A549 (cell line): ENCODE measurements at regions of chr14 and their contacts with region 1.

Region 1: DNA sequence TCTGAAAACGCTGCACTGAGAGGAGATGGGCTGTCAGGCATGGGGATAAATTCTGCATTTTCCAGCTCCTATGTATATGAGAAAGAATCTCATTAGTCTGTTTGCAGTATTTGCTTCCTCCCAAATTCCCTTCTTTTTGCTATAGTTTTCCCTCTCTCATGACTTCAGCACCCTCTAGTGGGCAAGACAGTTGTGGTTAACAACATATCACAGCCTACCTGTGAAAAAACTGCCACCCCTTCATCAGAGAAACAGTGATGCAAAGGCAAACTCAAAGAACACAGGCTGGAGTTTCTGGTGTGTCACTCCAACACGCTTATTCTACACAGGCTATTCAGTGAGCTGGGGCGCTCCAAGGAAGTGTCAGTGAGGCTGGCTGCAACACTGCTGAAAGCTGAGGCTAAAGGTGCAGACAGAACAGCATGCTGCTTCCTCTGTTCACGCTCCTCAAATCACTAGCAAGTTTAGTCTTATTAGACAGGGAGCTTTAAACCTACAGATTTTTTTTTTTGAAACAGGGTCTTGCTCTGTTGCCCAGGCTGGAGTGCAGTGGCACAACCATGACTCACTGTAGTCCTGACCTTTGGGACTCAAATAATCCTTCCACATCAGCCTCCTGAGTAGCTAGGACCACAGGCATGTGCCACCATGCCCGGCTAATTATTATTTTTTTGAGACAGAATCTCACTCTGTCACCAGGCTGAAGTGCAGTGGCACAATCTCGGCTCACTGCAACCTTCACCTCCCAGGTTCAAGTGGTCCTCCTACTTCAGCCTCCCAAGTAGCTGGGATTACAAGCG is 19.3 kb downstream of the ZC2HC1C start:
- DNase-seq: peak; percentile 43 to 63
- ATAC-seq: peak; percentile 90 to 94
- H3K4me3 ChIP-seq: no peak overlapping the region
- H3K27ac ChIP-seq: no peak overlapping the region
- H3K4me1 ChIP-seq: no peaks in the 10 kb centered on the region
- CTCF ChIP-seq: peak; percentile 86
- EP300 ChIP-seq: no peak
- POLR2A ChIP-seq: no peak
- RAD21 ChIP-seq: peak; percentile 84 to 93

Region 2: DNA sequence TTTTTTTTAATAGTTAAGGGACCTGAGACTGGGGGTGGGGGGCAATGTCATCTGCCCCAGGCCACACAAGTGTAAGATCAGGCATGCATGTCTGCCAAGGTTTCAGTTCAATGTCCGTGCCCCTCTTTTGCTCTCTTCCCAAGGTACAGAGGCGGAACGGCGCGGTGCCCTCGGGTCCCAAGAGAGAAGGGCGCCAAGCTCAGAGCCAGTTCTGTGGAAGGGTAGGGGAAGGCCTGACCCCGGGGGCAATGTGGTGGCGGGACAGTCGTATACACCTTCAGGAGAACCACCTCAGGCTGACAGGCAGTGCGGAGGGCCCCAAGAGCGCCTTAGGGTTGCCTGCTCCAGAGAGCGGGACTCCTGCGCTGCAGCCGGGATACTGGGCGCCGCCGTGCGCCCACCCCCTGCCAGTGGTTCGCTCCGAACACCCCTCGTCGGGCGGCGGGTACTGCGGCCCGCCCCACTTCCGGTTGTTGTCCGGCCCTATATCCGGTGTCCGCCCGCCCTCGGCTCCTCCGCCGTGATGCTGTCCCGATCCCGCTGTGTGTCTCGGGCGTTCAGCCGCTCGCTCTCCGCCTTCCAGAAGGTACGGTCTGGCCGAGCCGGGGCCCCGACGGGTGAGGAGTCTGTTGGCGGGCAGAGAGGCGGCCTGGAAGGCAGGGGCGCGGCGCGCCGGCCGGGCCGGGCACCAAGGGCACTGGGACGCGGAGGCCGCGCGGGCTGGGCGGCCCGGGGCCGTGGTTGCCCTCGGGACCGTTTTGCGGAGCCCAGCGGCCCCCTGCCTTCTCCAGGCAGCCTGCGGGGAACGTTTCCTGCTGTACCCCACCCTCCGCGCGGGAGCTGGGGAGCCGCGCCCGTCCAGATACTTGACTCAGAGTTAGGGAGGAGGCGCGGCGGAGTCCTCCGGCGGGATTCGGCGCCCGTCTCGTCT is 207.1 kb before region 1 on chr14 and contains the start of gene DLST:
- CTCF ChIA-PET with region 1: interaction called, 19 read pairs
- POLR2A ChIA-PET with region 1: no interaction called
- DNase-seq: peak; percentile 90 to 92
- ATAC-seq: peak; percentile 98
- H3K4me3 ChIP-seq: peak within 1 kb of the TSS; percentile 100
- H3K27ac ChIP-seq: peak within 1 kb of the TSS; percentile 94 to 99
- H3K4me1 ChIP-seq: peaks cover 50% of the 10 kb centered on the region
- CTCF ChIP-seq: no peak
- EP300 ChIP-seq: no peak
- POLR2A ChIP-seq: no peak; the same call in none of the 2 replicates
- RAD21 ChIP-seq: no peak
- polyA plus RNA-seq, gene DLST: 129 and 137 TPM in 2 replicates

Region 3: GRCh38 chr14:74913986-74914573 is 174.7 kb before region 1 on chr14:
- CTCF ChIA-PET with region 1: interaction called, 87 read pairs
- POLR2A ChIA-PET with region 1: no interaction called
- DNase-seq: peak; percentile 68 to 73
- ATAC-seq: peak; percentile 85 to 88
- H3K4me3 ChIP-seq: no peak overlapping the region
- H3K27ac ChIP-seq: no peak overlapping the region
- H3K4me1 ChIP-seq: peaks cover 9% of the 10 kb centered on the region; the same call in 2 of the 3 replicates
- CTCF ChIP-seq: peak; percentile 78
- EP300 ChIP-seq: no peak
- POLR2A ChIP-seq: no peak
- RAD21 ChIP-seq: peak; percentile 73 to 75

Region 4: DNA sequence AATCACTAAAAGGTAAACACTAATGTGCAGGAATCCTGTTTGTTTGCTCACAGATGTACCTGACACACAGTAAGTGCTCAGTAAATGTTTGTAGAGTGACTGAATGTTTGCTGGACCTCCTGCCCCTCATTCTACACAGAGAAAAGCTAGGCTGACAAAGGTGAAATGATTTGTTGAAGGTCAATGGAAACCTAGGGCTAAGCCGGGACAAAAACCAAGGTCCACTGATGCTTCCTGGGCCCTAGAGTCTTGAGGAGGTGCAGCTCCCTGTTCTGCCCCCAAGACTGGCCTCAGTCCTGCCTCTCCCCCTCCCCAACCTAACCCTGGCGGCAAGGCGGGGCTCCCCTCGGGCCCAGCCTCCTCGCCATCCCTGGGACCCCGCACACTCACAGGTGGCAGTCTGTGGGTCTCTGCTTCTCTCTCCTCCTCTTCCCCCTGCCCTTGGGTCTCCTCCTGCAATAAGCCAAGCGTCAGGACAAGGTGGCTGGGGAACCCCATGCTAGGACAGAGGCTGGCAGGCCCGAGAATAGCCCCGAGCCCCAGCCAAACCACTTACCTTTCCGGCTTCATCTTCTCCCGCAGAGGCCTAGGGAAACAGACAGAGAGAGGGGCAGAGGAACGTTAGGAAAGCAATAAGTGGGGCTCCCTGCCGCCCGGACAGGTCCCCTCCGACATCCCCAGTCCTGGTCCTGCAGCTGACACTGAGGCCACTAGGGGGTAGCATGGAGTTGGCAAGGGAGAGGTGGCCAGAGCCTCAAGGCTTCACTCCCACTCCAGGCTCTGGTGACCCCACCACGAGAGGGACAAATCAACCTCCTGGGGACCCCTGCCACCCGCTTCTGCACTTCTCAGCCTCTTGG is 142.7 kb before region 1 on chr14:
- CTCF ChIA-PET with region 1: interaction called, 62 read pairs
- POLR2A ChIA-PET with region 1: no interaction called
- DNase-seq: peak; percentile 68 to 95
- ATAC-seq: peak; percentile 80 to 92
- H3K4me3 ChIP-seq: no peak overlapping the region
- H3K27ac ChIP-seq: peak overlapping the region; percentile 37 to 65; a peak in 4 of 6 replicates
- H3K4me1 ChIP-seq: peaks cover 19% of the 10 kb centered on the region
- CTCF ChIP-seq: peak; percentile 83
- EP300 ChIP-seq: no peak
- POLR2A ChIP-seq: no peak
- RAD21 ChIP-seq: peak; percentile 81 to 83

Region 5: GRCh38 chr14:74973003-74973653 is 115.6 kb before region 1 on chr14:
- CTCF ChIA-PET with region 1: interaction called, 10 read pairs
- POLR2A ChIA-PET with region 1: no interaction called
- DNase-seq: no peak
- ATAC-seq: no peak
- H3K4me3 ChIP-seq: no peak overlapping the region
- H3K27ac ChIP-seq: no peak overlapping the region
- H3K4me1 ChIP-seq: no peaks in the 10 kb centered on the region
- CTCF ChIP-seq: no peak
- EP300 ChIP-seq: no peak
- POLR2A ChIP-seq: no peak
- RAD21 ChIP-seq: no peak

Region 6: DNA sequence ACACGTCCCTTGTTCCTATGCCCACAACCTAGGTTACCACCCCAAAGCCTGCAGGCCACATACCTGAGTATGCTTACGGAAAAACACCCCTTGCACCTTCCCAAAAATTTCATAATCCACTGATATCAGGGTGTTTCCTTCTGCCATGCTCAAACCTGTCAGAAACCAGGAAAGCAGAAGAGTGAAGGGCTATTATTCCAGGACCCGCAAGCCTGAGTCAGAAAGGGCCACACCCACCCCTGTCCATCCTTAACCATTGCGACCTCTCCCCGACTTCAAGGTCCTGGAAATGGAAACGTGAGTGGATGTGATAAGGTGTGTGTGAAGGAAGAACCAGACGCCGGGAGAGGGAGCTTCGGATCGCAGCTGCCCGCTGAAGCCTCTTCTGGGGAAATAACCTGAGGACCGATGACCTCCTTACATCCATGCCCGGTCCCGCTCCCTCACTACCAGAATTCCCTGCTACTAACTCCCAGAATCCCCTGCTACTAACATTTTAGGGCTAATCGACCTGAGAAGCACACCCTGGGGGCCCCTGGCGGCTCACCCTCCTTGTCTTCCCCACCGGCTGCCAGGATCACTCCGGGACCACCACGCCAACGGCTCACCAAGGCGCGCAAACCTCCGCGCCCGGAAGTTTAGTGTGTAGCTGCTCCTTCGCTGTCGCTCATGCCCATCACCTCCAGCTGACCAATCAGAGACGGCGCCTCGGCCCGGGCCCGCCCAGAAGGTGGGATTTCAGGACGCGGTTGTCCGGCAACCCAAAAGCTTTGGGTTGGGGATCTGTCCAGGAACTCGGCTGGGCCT is 25.2 kb before region 1 on chr14 and contains the start of gene ACYP1:
- CTCF ChIA-PET with region 1: interaction called, 85 read pairs
- POLR2A ChIA-PET with region 1: interaction called, 3 read pairs
- DNase-seq: peak; percentile 83 to 90
- ATAC-seq: peak; percentile 97 to 99
- H3K4me3 ChIP-seq: peak within 1 kb of the TSS; percentile 55
- H3K27ac ChIP-seq: peak within 1 kb of the TSS; percentile 64 to 87
- H3K4me1 ChIP-seq: peaks cover 19% of the 10 kb centered on the region; the same call in 2 of the 3 replicates
- CTCF ChIP-seq: no peak
- EP300 ChIP-seq: no peak
- POLR2A ChIP-seq: peak; percentile 22; the same call in 1 of the 2 replicates
- RAD21 ChIP-seq: no peak
- polyA plus RNA-seq, gene ACYP1: 26.5 and 36.7 TPM in 2 replicates

Region 7: DNA sequence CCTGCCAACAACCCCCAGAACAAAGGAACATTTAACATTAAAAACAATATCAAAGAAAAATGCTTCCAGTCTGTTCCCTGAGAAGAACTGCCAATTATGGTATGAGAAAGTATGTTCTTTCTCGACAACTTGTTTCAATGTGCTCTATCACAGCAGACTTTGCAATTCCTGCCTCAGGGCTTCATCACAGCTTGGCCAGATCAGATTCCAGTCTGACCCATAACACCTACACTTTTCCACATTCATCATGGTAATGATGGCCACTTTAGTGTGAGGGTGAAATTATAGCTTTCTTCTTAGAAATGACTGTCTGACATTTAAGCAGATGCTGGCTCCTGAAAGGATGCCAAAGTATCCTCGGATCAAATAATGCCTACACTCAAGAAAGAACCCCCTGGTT is 21.1 kb after region 1 on chr14:
- CTCF ChIA-PET with region 1: interaction called, 29 read pairs
- POLR2A ChIA-PET with region 1: no interaction called
- DNase-seq: no peak
- ATAC-seq: no peak
- H3K4me3 ChIP-seq: no peak overlapping the region
- H3K27ac ChIP-seq: no peak overlapping the region
- H3K4me1 ChIP-seq: no peaks in the 10 kb centered on the region
- CTCF ChIP-seq: no peak
- EP300 ChIP-seq: no peak
- POLR2A ChIP-seq: no peak
- RAD21 ChIP-seq: no peak